Heart left ventricle (tissue), 16 donors: ENCODE measurements at regions of chr7 and their contacts with region 1.

Region 1: GRCh38 chr7:668139-668931 is 58.2 kb upstream of the DNAAF5 start:
- DNase-seq: peak in 4 of 5 donors; percentile 35 to 57 (median 52)
- ATAC-seq: peak in 3 of 4 donors; percentile 17 to 38 (median 23)
- H3K4me3 ChIP-seq: peak overlapping the region in 3 of 12 donors; percentile 19 to 30 (median 28)
- H3K27ac ChIP-seq: peak overlapping the region; percentile 12 to 86 (median 58)
- H3K4me1 ChIP-seq: peaks cover 0 to 50% (median 39%) of the 10 kb centered on the region in 12 donors
- H3K27me3 ChIP-seq: no peaks in the 10 kb centered on the region
- CTCF ChIP-seq: no peak
- POLR2A ChIP-seq: no peak

Region 2: GRCh38 chr7:332646-333392 is 335.5 kb before region 1 on chr7:
- intact Hi-C with region 1: loop called in 1 of 10 experiments (anchors 10 kb)
- DNase-seq: peak; percentile 76 to 92 (median 81)
- ATAC-seq: peak; percentile 75 to 94 (median 88)
- H3K4me3 ChIP-seq: peak overlapping the region; percentile 5 to 58 (median 50)
- H3K27ac ChIP-seq: peak overlapping the region; percentile 32 to 90 (median 74)
- H3K4me1 ChIP-seq: peaks cover 0 to 16% (median 12%) of the 10 kb centered on the region in 12 donors
- H3K27me3 ChIP-seq: peaks cover 0 to 6% (median 0%) of the 10 kb centered on the region in 9 donors
- CTCF ChIP-seq: peak; percentile 83 to 95 (median 88)
- POLR2A ChIP-seq: no peak

Region 3: GRCh38 chr7:610531-611275 is 57.6 kb before region 1 on chr7:
- intact Hi-C with region 1: loop called in 1 of 10 experiments (anchors 5 kb)
- DNase-seq: peak in 4 of 5 donors; percentile 32 to 82 (median 56)
- ATAC-seq: peak; percentile 77 to 95 (median 92)
- H3K4me3 ChIP-seq: no peak overlapping the region
- H3K27ac ChIP-seq: peak overlapping the region; percentile 14 to 78 (median 63)
- H3K4me1 ChIP-seq: peaks cover 0 to 37% (median 20%) of the 10 kb centered on the region in 12 donors
- H3K27me3 ChIP-seq: no peaks in the 10 kb centered on the region
- CTCF ChIP-seq: no peak
- POLR2A ChIP-seq: no peak

Region 4: GRCh38 chr7:712381-713138 is 44.2 kb after region 1 on chr7:
- intact Hi-C with region 1: loop called in 2 of 10 experiments (anchors 5 kb)
- DNase-seq: peak in 1 of 5 donors; percentile 15
- ATAC-seq: no peak
- H3K4me3 ChIP-seq: peak overlapping the region; percentile 39 to 78 (median 62)
- H3K27ac ChIP-seq: peak overlapping the region in 3 of 12 donors; percentile 52 to 61 (median 59)
- H3K4me1 ChIP-seq: peaks cover 0 to 18% (median 0%) of the 10 kb centered on the region in 12 donors
- H3K27me3 ChIP-seq: no peaks in the 10 kb centered on the region
- CTCF ChIP-seq: no peak
- POLR2A ChIP-seq: no peak

Region 5: GRCh38 chr7:726084-726853 is 57.9 kb after region 1 on chr7 and contains the start of gene DNAAF5:
- intact Hi-C with region 1: loop called in 5 of 10 experiments (anchors 5 to 10 kb)
- DNase-seq: peak; percentile 87 to 92 (median 89)
- ATAC-seq: peak; percentile 62 to 92 (median 88)
- H3K4me3 ChIP-seq: peak within 1 kb of the TSS; percentile 49 to 98 (median 78)
- H3K27ac ChIP-seq: peak within 1 kb of the TSS in 11 of 12 donors; percentile 50 to 83 (median 78)
- H3K4me1 ChIP-seq: peaks cover under 1 to 33% (median 21%) of the 10 kb centered on the region in 12 donors
- H3K27me3 ChIP-seq: no peaks in the 10 kb centered on the region
- CTCF ChIP-seq: peak in 1 of 12 donors; percentile 9
- POLR2A ChIP-seq: peak in 1 of 2 donors; percentile 52
- total RNA-seq, gene DNAAF5: 13.9 to 45.8 (median 23.7) TPM

Region 6: DNA sequence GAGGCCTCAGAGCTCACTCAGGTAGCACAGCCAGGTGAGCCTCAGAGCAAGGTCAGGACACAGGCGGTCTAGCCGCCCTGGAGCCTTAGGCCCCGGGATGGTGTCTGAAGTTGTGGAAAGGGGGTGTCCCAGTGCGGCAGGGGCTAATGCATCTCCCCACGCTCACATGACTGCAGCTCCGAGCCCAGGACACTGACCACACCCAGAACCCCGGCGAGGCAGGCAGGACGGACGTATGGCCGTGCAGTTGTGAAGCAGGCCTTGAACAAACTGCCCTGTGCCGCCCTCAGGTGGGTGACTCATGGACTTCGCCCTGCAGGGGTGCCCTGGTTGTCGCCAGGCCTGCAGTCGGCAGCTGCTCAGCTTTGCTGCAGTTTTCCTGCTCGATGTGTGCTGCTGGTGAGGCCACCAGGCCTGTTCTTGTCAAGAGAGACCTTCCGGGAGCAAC is 63.8 kb after region 1 on chr7:
- intact Hi-C with region 1: loop called in 5 of 10 experiments (anchors 5 to 10 kb)
- DNase-seq: peak; percentile 48 to 81 (median 75)
- ATAC-seq: peak; percentile 77 to 87 (median 80)
- H3K4me3 ChIP-seq: no peak overlapping the region
- H3K27ac ChIP-seq: peak overlapping the region; percentile 29 to 93 (median 84)
- H3K4me1 ChIP-seq: peaks cover 3 to 41% (median 25%) of the 10 kb centered on the region in 12 donors
- H3K27me3 ChIP-seq: no peaks in the 10 kb centered on the region
- CTCF ChIP-seq: peak in 10 of 12 donors; percentile 22 to 62 (median 46)
- POLR2A ChIP-seq: no peak

Region 7: DNA sequence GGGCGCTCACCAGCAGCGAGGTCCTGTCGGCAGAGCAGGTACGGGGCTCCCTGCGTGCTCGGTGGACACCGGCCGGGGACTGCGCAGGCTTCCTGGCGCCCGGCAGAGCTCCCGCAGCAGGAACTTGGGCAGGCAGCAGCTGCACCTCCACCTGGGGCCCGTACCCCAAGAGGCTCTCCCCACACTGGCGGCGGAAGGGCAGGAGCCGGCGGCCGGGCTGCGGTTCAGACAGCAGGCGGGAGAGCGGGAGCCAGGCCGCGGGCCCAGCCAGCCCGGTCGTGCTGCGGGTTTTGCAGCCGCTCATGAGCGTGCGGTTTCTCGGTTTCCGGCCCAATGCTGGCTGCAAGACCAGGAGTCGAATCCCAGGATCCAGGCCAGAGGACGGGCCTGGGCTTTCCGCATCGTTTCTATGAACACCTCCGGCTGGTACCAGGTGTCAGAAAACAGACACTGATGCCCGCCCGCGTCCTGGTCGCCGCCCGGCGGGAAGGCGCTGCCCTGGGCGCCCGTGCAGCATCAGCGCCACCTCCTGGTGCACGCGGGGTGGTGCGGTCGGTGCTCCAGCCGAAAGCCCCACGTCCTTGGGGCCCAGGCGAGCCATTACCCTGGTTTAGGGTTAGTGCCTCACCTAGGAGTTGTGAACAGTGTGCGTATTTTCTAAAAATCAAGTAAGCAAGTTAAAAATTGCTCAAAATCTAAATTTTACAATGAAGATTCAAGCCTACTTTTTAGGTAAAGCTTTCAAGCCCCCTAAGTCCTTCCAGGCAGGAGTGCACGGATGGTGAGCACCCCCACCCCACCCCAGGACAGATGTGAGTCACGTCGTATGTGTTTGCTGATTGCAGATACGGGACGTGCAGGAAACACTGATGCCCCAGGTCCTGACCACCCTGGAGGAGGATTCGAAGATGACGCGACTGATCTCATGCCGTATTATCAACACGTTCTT is 106.1 kb after region 1 on chr7:
- intact Hi-C with region 1: loop called in 1 of 10 experiments (anchors 10 kb)
- DNase-seq: peak in 3 of 5 donors; percentile 52 to 61 (median 52)
- ATAC-seq: peak in 3 of 4 donors; percentile 24 to 64 (median 44)
- H3K4me3 ChIP-seq: no peak overlapping the region
- H3K27ac ChIP-seq: no peak overlapping the region
- H3K4me1 ChIP-seq: peaks cover 0 to 34% (median 20%) of the 10 kb centered on the region in 12 donors
- H3K27me3 ChIP-seq: no peaks in the 10 kb centered on the region
- CTCF ChIP-seq: peak; percentile 82 to 97 (median 92)
- POLR2A ChIP-seq: no peak